ENCODE measurements at regions of chr14 and their contacts with region 1.

Region 1: GRCh38 chr14:83816765-83817164 is 1713.2 kb upstream of the FLRT2 start:
- DNase-seq: peak; percentile 87
- H3K4me3 ChIP-seq: peak overlapping the region in 1 of 3 experiments; percentile 35
- H3K27ac ChIP-seq: peak overlapping the region; percentile 37
- H3K4me1 ChIP-seq: peaks cover 21% of the 10 kb centered on the region
- H3K27me3 ChIP-seq: no peaks in the 10 kb centered on the region
- CTCF ChIP-seq: no peak
- POLR2A ChIP-seq: peak; percentile 57

Region 2: GRCh38 chr14:83975841-83976770 is 159.3 kb after region 1 on chr14:
- CTCF ChIA-PET with region 1: no interaction called
- POLR2A ChIA-PET with region 1: no interaction called
- dilution Hi-C with region 1: no loop called
- intact Hi-C with region 1: loop called (anchors 10 kb)
- DNase-seq: peak; percentile 97
- H3K4me3 ChIP-seq: no peak overlapping the region
- H3K27ac ChIP-seq: no peak overlapping the region
- H3K4me1 ChIP-seq: peaks cover 11% of the 10 kb centered on the region
- H3K27me3 ChIP-seq: no peaks in the 10 kb centered on the region
- CTCF ChIP-seq: no peak
- POLR2A ChIP-seq: no peak